Gastrocnemius medialis (tissue), 4 donors: ENCODE measurements at regions of chr1 and their contacts with region 1.

Region 1: DNA sequence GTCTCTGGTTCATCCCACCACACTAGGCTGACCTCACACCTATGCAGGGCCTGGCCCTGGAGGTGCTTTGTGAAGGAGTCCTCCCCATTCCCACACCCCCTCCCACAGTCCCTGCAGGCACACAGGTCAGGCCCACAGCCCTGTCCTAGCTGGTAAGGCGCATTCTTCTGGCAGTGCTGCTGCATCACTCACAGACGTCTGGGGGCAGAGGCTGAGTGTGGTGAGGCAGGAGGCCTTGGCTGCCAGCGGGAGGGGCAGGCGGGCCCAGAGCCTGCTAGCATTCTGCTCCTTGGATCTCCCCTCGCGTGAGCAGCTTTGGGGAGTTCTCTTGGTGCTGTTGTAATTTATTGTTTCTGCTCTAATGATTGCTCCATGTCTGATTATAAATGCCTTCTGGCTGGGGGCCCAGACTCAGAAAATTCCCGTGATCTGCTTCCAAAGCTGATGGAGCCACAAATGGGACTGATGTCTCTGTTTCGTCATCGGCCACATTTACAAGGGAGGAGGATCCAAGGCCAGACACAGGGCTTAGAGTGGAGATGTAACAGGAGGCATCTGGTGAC is 62.9 kb downstream of the TRABD2B start:
- DNase-seq: peak; percentile 51 to 76
- ATAC-seq: peak; percentile 8 to 55
- H3K4me3 ChIP-seq: no peak overlapping the region
- H3K27ac ChIP-seq: peak overlapping the region; percentile 1 to 70 (median 51)
- H3K4me1 ChIP-seq: peaks cover 0 to 30% of the 10 kb centered on the region in 2 donors
- H3K27me3 ChIP-seq: no peaks in the 10 kb centered on the region
- CTCF ChIP-seq: no peak
- POLR2A ChIP-seq: no peak

Region 2: DNA sequence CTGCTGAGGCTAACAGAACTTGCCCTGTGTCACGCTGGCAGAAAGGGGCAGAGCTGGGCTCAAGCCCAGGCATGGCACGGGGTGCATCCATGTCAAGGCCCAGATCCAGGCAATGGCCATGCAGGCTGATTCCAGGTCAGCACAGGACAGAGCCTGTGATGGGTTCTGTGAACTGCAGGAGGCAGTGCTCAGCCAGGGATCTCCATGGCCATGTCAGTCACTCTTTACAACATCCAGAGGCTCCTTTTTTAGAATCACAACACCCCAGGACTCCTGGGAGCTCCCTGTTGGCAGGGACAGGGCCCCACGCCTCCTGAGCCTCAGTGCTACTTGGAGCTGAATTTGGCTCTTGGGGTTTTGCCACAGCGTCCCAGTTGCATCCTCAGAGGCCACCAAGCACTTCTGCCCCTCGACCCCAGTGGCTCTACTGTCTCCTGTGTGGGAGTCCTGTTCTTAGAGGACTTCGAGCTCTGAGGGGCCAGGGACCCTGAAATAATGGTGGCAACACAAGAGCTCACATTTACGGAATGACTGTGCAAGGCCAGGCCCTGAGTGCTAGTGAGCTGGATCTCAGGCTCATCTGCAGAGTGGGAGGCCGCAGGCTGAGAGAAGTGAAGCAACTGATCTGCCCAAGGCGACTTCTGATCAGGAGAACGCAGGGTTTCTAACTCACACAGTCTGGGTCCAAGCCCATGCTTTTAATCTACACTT is 148.6 kb before region 1 on chr1:
- in situ Hi-C with region 1: no loop called
- intact Hi-C with region 1: loop called (anchors 5 kb)
- DNase-seq: peak; percentile 40 to 60
- ATAC-seq: peak; percentile 81 to 85
- H3K4me3 ChIP-seq: no peak overlapping the region
- H3K27ac ChIP-seq: peak overlapping the region in 3 of 4 donors; percentile 53 to 57 (median 57)
- H3K4me1 ChIP-seq: peaks cover 24 to 54% of the 10 kb centered on the region in 2 donors
- H3K27me3 ChIP-seq: no peaks in the 10 kb centered on the region
- CTCF ChIP-seq: peak in 4 of 5 experiments; percentile 28 to 48 (median 43)
- POLR2A ChIP-seq: no peak

Region 3: DNA sequence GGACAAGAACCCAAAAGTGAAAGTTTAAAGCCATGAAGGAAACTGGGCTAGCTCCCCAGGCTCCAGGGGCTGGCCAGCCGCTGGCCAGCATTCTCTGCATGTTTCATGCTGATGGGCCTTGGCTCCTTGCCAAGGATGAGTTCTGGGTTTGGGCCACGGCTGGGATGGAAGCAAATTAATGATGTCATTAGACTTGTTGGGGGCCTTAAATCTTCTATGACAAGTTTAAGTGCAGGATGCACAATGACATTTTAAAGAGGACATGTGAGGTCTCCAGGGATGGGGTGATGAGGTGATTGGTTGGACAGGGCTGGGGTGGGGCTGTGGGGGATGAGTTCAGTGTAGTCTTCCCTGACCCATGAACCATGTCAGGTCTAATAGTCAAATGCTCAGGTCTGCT is 136.7 kb before region 1 on chr1:
- in situ Hi-C with region 1: no loop called
- intact Hi-C with region 1: no loop called
- DNase-seq: no peak
- ATAC-seq: no peak
- H3K4me3 ChIP-seq: no peak overlapping the region
- H3K27ac ChIP-seq: no peak overlapping the region
- H3K4me1 ChIP-seq: no peaks in the 10 kb centered on the region
- H3K27me3 ChIP-seq: no peaks in the 10 kb centered on the region
- CTCF ChIP-seq: no peak
- POLR2A ChIP-seq: no peak

Region 4: DNA sequence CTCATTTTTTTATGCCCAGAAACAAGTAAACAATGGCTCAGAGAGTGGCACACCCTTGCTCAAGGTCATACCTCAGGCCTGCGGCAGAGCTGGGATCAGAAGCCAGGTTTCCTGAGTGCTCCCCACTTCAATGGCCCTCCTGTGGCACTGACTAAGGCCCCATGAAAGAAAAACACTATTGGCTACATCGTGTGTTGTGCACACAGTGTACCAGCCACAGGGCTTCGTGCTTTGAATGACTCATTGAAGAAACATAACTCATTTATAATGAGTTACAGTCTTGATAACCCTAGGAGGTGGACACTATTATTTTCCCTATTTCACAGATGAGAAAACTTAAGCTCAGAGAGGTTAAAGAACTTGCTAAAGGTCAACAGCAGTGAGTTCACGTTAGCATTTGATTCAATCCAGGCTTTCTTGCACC is 28.3 kb before region 1 on chr1:
- in situ Hi-C with region 1: no loop called
- intact Hi-C with region 1: no loop called
- DNase-seq: no peak
- ATAC-seq: peak in 1 of 2 donors; percentile 64
- H3K4me3 ChIP-seq: no peak overlapping the region
- H3K27ac ChIP-seq: no peak overlapping the region
- H3K4me1 ChIP-seq: no peaks in the 10 kb centered on the region
- H3K27me3 ChIP-seq: no peaks in the 10 kb centered on the region
- CTCF ChIP-seq: no peak
- POLR2A ChIP-seq: no peak

Region 5: GRCh38 chr1:47948126-47948525 is 13.8 kb after region 1 on chr1:
- in situ Hi-C with region 1: no loop called
- intact Hi-C with region 1: loop called (anchors 2 kb)
- DNase-seq: no peak
- ATAC-seq: peak in 1 of 2 donors; percentile 72
- H3K4me3 ChIP-seq: no peak overlapping the region
- H3K27ac ChIP-seq: no peak overlapping the region
- H3K4me1 ChIP-seq: no peaks in the 10 kb centered on the region
- H3K27me3 ChIP-seq: no peaks in the 10 kb centered on the region
- CTCF ChIP-seq: peak in 1 of 5 experiments; percentile 23
- POLR2A ChIP-seq: no peak